HEK293 (cell line): ENCODE measurements at regions of chr1 and their contacts with region 1.

Region 1: GRCh38 chr1:67214420-67215174 is 48.3 kb downstream of the IL23R start:
- H3K4me3 ChIP-seq: no peak overlapping the region
- H3K27ac ChIP-seq: no peak overlapping the region
- H3K4me1 ChIP-seq: no peaks in the 10 kb centered on the region
- CTCF ChIP-seq: no peak

Region 2: GRCh38 chr1:66764994-66765578 is 449.5 kb before region 1 on chr1:
- CTCF ChIA-PET with region 1: interaction called, 64 read pairs
- POLR2A ChIA-PET with region 1: no interaction called
- H3K4me3 ChIP-seq: no peak overlapping the region
- H3K27ac ChIP-seq: no peak overlapping the region
- H3K4me1 ChIP-seq: no peaks in the 10 kb centered on the region
- CTCF ChIP-seq: no peak

Region 3: DNA sequence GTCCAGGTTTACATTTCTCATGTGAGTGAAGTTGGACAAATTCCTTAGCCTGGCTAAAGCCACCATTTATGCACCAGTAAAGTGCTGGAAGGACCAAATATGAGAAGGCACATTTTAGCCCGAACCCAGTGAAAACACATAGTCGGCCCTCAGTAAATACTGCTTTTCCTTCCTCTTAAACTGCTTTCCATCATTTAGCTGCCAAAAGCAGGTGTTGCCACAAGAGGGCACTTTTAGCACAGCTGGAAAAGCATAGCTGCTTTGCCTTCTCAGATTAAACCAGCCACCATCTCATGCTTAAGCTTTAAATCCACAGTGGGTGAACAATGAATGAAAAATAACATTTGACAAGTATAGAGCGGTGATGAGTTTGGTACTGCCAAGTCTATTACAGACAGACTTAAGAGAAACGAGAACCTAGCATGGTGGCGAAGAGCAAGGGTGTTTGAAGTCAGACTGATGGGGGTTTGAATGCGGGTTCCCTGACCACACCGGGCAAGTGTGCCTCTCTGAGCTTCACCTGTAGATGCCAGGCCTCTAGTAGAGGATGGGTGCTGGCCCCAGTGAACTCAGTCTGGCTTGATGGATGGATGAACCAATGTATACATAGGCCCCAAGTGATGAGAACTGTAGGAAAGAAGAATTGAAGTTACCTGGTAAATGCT is 218.4 kb before region 1 on chr1:
- CTCF ChIA-PET with region 1: interaction called, 54 read pairs
- POLR2A ChIA-PET with region 1: no interaction called
- H3K4me3 ChIP-seq: no peak overlapping the region
- H3K27ac ChIP-seq: no peak overlapping the region
- H3K4me1 ChIP-seq: no peaks in the 10 kb centered on the region
- CTCF ChIP-seq: peak; percentile 65; the same call in 1 of the 2 replicates

Region 4: GRCh38 chr1:67110352-67110751 is 104.2 kb before region 1 on chr1:
- CTCF ChIA-PET with region 1: no interaction called
- POLR2A ChIA-PET with region 1: no interaction called
- H3K4me3 ChIP-seq: no peak overlapping the region
- H3K27ac ChIP-seq: no peak overlapping the region
- H3K4me1 ChIP-seq: no peaks in the 10 kb centered on the region
- CTCF ChIP-seq: no peak

Region 5: GRCh38 chr1:67162957-67163356 is 51.6 kb before region 1 on chr1:
- CTCF ChIA-PET with region 1: interaction called, 20 read pairs
- POLR2A ChIA-PET with region 1: no interaction called
- H3K4me3 ChIP-seq: no peak overlapping the region
- H3K27ac ChIP-seq: no peak overlapping the region
- H3K4me1 ChIP-seq: no peaks in the 10 kb centered on the region
- CTCF ChIP-seq: no peak

Region 6: GRCh38 chr1:67227196-67227595 is 12.6 kb after region 1 on chr1:
- CTCF ChIA-PET with region 1: interaction called, 62 read pairs
- POLR2A ChIA-PET with region 1: no interaction called
- H3K4me3 ChIP-seq: no peak overlapping the region
- H3K27ac ChIP-seq: no peak overlapping the region
- H3K4me1 ChIP-seq: no peaks in the 10 kb centered on the region
- CTCF ChIP-seq: no peak

Region 7: DNA sequence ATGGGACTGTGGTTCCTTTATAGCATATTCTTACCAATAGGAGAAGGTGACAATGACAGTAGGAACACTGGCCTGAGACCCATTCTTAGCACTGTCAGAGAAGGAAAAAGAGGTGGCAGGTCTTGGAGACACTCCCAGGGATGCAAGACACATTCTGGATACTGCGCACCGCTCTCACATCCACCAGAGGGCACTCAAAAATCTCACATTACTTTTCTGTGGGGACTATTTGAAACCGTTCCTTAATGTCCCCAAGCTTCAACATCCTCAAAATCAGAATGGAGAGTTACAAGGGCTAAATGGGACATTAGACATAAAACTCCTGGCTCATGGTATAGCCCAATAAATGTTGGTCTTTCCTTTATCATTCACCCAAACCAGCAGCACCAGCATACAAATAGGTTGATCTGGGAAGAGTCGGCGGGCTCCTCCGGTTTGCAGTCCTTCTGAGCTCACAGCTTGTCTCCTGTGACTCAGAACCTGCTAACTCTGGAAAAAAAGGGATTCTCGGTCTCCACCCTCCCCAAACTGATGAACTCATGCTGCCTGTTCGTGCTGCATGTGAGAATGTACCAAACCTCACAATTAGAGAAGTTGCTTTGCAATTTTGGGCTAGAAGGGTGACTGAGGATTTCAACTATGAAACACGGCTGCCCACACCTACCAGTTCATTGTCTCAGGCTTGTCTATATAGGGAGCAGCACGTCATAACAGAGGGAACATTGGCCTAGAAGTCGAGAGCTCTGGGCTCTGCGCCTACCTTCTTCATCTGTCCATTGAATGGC is 133.3 kb after region 1 on chr1:
- CTCF ChIA-PET with region 1: interaction called, 13 read pairs
- POLR2A ChIA-PET with region 1: no interaction called
- H3K4me3 ChIP-seq: no peak overlapping the region
- H3K27ac ChIP-seq: no peak overlapping the region
- H3K4me1 ChIP-seq: no peaks in the 10 kb centered on the region
- CTCF ChIP-seq: peak; percentile 69